Naive thymus-derived CD4-positive, alpha-beta T cell (primary cell): ENCODE measurements at regions of chr3 and their contacts with region 1.

Region 1: DNA sequence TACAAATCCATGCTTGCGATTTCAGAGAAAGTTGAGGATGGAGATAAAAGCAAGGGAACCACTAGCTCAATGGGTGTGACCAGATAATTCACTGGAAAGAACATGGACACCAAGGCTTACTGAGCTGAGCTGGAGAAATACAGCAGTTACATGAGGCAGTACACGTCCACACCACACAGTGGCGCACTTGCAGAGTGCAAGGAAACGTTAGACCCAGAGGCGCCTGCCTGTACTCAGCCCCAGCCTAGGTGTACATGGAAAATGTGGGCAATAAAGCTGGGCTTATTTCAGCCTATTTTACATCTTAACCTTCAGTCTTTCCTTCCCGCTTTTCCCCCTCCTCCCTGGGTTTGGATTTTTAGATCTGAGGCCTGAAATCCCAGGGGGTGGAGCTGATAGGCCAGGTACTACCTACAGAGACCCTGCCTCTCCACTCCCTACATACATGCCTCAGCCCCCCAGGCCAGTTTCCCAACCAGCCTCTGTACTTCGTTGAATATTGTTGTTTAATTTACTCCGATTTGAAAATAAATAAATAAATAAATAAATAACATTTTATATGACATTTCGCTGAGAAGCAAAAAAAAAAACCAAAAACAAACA is 60.1 kb downstream of the PCOLCE2 start:
- DNase-seq: peak in 8 of 9 donors; percentile 1 to 59 (median 18)
- ATAC-seq: peak; percentile 92
- H3K4me3 ChIP-seq: no peak overlapping the region
- H3K4me3 Mint-ChIP-seq: no peak overlapping the region
- H3K27ac ChIP-seq: no peak overlapping the region
- H3K27ac Mint-ChIP-seq: no peak overlapping the region
- H3K4me1 ChIP-seq: no peaks in the 10 kb centered on the region
- H3K4me1 Mint-ChIP-seq: peaks cover 0 to 3% (median 0%) of the 10 kb centered on the region in 7 donors
- H3K27me3 ChIP-seq: no peaks in the 10 kb centered on the region
- H3K27me3 Mint-ChIP-seq: peaks cover 2 to 22% (median 5%) of the 10 kb centered on the region in 5 donors

Region 2: GRCh38 chr3:142586803-142587406 is 241.9 kb before region 1 on chr3:
- CTCF ChIA-PET with region 1: no interaction called
- POLR2A ChIA-PET with region 1: no interaction called
- intact Hi-C with region 1: loop called in 1 of 2 experiments (anchors 5 kb)
- DNase-seq: peak in 7 of 9 donors; percentile 15 to 51 (median 28)
- ATAC-seq: peak; percentile 74
- H3K4me3 ChIP-seq: no peak overlapping the region
- H3K4me3 Mint-ChIP-seq: no peak overlapping the region
- H3K27ac ChIP-seq: no peak overlapping the region
- H3K27ac Mint-ChIP-seq: no peak overlapping the region
- H3K4me1 ChIP-seq: no peaks in the 10 kb centered on the region
- H3K4me1 Mint-ChIP-seq: no peaks in the 10 kb centered on the region
- H3K27me3 ChIP-seq: no peaks in the 10 kb centered on the region
- H3K27me3 Mint-ChIP-seq: peaks cover 6 to 49% (median 16%) of the 10 kb centered on the region in 5 donors